ENCODE measurements at regions of chr18 and their contacts with region 1.

Region 1: GRCh38 chr18:62772860-62773584 is 57.7 kb downstream of the PHLPP1 start:
- DNase-seq: no peak
- ATAC-seq: no peak

Region 2: DNA sequence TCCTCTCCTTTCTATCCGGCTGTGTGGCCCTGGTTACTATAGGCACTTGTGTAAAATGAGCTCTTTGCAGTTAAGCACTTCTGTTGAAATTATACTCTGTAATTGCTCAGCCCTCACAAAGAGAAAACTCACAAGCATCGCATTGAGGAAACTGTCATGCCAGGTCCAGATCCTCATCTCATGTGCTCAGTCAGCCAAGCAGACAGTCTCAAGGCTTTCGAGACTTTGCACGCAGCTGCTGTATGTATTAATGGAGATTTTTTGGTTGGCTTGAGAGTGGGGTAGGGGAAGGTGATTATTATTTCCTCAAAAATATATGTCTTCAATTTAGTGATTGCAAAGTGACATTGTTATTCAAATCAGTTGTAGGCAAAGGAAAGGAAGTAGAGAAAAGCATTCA is 90.7 kb before region 1 on chr18:
- intact Hi-C with region 1: no loop called
- DNase-seq: no peak
- ATAC-seq: no peak

Region 3: GRCh38 chr18:62788876-62789275 is 15.9 kb after region 1 on chr18:
- intact Hi-C with region 1: loop called (anchors 1 kb)
- DNase-seq: no peak
- ATAC-seq: no peak

Region 4: GRCh38 chr18:62802523-62802922 is 29.5 kb after region 1 on chr18:
- intact Hi-C with region 1: no loop called
- DNase-seq: no peak
- ATAC-seq: no peak